AG04450 (cell line): ENCODE measurements at regions of chr11 and their contacts with region 1.

Region 1: GRCh38 chr11:27296497-27296896 is 66.5 kb downstream of the CCDC34 start:
- DNase-seq: no peak
- H3K4me3 ChIP-seq: no peak overlapping the region
- H3K27ac ChIP-seq: no peak overlapping the region
- H3K27me3 ChIP-seq: no peaks in the 10 kb centered on the region
- CTCF ChIP-seq: peak; percentile 87

Region 2: DNA sequence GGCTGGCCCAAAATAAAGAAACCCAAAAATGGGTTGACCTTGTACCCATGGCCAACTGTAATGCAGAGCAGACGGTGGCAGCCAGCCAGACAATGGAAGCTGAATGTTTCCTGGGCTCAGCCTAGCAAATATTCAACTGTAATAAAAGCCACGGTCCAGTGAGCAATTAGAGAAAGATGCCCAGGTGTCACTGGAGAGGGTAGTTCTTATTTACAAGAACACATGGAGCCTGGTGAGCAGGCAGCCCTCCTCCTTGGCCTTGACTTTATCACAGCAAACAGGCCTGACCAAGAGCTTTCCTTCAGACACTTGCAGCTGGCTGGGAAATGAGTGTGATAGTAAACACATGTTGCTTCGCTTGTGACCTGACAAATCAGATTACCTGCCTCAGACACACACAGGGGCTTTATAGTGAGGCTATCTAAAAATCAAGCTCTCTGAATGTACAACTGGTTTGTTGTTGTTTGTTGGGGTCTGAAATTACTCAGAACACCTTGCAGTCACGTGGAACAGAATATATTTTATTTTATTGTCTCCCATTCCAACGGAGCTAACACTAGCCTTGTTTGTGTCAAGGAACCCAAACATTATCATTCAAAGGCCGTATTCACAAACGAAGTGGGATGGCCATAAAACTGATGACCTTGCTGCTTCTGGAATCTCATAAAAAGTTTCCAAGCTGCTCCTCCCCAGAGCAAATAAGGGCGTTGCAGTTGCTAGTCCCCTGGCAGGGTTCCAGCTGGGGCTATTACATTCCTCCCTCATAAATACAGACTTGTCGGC is 94.9 kb before region 1 on chr11:
- CTCF ChIA-PET with region 1: interaction called, 17 read pairs
- POLR2A ChIA-PET with region 1: no interaction called
- DNase-seq: no peak
- H3K4me3 ChIP-seq: no peak overlapping the region
- H3K27ac ChIP-seq: no peak overlapping the region
- H3K27me3 ChIP-seq: peaks cover 2% of the 10 kb centered on the region
- CTCF ChIP-seq: no peak

Region 3: DNA sequence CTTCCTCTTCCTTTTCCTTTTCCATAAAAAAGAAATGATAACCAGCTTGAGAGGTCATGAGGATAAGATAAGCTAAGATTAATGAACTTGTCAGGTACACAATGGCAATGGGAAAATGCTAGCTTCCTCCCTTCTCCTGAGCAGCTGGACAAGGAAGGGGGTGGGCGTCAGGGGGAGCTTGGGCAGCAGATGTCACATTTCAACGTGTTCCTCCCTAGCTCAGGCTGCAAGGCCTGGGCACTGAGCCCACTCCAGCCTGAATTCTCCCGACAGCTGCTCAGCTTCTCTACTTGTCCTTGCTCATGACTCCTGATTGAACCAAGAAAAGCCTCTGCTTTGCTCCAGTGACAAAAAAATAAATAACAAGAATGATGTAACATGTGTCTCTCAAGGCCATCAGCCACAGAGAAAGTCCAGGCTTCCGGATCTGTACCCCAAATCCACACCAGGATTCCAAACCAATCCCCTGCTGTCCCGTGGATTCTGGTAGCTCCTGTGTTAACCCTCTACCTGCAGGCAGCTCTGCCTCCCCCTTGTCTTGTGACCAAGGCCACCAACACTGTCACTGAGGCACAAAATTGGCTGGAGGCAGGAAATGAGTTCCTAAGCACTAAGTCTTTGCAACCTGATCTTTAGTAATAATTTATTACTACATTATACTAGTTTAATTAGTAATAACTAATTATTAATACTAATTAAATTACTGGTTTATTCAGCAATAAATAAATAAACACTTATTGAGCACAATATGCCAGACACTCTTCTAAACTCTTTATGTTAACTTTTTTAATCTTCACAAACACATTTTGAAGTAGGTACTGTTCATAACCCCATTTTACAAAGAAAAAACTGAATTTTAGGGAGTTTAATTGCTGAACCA is 80.0 kb before region 1 on chr11:
- CTCF ChIA-PET with region 1: interaction called, 18 read pairs
- POLR2A ChIA-PET with region 1: no interaction called
- DNase-seq: no peak
- H3K4me3 ChIP-seq: no peak overlapping the region
- H3K27ac ChIP-seq: peak overlapping the region; percentile 3
- H3K27me3 ChIP-seq: no peaks in the 10 kb centered on the region
- CTCF ChIP-seq: no peak

Region 4: GRCh38 chr11:27313157-27313821 is 16.8 kb after region 1 on chr11:
- CTCF ChIA-PET with region 1: interaction called, 70 read pairs
- POLR2A ChIA-PET with region 1: no interaction called
- DNase-seq: no peak
- H3K4me3 ChIP-seq: no peak overlapping the region
- H3K27ac ChIP-seq: no peak overlapping the region
- H3K27me3 ChIP-seq: no peaks in the 10 kb centered on the region
- CTCF ChIP-seq: no peak

Region 5: GRCh38 chr11:27497284-27497866 is 200.9 kb after region 1 on chr11:
- CTCF ChIA-PET with region 1: interaction called, 20 read pairs
- POLR2A ChIA-PET with region 1: no interaction called
- DNase-seq: no peak
- H3K4me3 ChIP-seq: no peak overlapping the region
- H3K27ac ChIP-seq: no peak overlapping the region
- H3K27me3 ChIP-seq: no peaks in the 10 kb centered on the region
- CTCF ChIP-seq: peak; percentile 44

Region 6: DNA sequence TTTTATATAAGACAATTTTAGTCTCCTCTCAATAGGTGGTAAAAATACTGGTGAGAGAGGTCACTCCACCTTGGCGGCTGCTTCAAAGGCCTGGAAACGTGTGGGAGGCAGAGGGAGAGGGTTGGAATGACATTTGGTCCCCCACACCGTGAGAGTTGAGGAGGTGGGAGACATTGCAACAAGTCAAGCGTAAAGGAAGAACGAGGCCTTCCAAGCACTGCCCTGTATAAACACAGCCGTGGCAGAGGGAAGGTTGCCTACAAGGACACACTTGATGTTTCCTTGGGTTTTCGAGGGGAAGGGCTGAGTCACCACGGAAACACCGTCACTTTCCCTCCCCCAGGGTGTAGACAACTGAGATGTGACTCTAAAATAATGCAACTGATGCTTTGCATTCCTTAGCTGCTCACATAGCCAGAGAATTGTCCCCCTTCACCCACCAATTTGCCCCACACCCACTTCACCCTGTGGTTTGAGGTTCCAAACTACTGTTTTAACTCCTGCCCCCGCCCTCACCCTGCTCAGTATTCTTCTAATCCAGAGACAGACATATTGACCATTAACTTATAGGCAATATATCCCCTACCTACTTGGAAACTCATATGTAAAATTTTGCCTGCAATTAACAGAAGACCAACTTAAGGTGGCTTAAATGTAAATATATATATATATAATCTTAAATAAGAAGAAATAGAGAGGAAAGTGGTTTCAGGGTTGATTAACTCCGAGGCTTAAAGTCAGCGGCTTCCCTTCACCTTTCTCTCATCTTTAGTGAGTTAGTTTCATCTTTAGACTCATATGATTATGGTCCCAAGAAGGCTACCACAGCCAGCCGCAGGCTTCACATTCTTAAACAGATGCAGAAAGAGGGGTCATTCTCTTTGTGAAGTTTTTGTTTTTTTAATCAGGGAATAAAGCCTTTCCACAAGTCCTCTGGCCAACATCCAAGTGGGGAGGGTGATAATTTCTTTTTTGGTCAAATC is 457.8 kb after region 1 on chr11:
- CTCF ChIA-PET with region 1: no interaction called
- POLR2A ChIA-PET with region 1: no interaction called
- DNase-seq: peak; percentile 1
- H3K4me3 ChIP-seq: no peak overlapping the region
- H3K27ac ChIP-seq: no peak overlapping the region
- H3K27me3 ChIP-seq: peaks cover 2% of the 10 kb centered on the region
- CTCF ChIP-seq: no peak